Endothelial cell of umbilical vein (primary cell): ENCODE measurements at regions of chr6 and their contacts with region 1.

Region 1: DNA sequence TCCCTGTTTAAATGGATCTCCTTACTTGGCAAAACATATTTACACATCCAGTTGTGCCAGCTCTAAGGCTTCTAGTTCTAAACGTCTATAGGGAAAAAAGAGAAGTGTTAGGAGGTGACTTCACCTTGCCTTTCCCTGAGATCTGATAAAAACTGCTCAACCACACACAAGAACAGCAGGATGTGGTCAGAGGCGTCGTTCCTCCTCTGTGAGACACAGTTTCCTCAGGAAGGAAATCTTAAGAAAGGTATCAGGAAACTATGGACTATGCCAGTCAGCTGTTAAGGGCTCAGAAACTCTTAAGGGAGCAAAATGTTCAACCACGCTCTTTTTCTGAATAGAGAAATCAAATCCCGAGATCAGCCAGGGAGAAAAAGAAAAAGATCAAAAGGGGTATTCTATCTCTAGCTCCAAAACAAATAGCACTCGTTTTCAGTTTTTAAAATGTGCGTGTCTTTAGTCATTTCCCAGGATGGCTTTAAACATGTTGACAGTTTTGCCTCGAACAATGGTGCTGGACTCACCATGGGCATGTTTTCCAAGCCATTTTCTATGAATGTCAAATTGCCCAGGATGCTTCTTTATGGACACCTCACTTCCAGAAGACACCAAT is 154.5 kb downstream of the HACE1 start:
- DNase-seq: peak; percentile 88
- H3K4me3 ChIP-seq: peak overlapping the region in 1 of 3 experiments; percentile 45
- H3K27ac ChIP-seq: peak overlapping the region; percentile 99
- H3K4me1 ChIP-seq: peaks cover 48% of the 10 kb centered on the region
- H3K27me3 ChIP-seq: no peaks in the 10 kb centered on the region
- CTCF ChIP-seq: no peak
- POLR2A ChIP-seq: peak; percentile 51

Region 2: DNA sequence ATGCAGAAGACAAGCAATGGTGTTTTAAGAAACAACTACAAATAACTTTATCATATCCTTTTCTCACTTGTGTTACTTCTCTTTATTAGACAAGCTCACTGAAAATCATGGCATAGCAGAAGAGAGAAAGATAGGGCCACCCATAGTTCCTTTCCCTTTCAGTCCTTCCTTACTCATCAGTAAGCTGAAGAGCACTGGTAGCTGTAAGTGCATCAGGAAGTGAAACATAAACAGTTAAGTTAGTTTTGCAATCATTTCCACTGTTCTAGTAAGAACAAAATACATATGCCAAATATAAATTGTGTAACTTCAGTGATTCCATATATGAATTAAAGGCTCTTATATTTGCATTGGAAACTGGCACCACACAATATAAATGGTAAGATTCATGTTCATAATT is 65.5 kb before region 1 on chr6:
- CTCF ChIA-PET with region 1: interaction called, 4 read pairs
- POLR2A ChIA-PET with region 1: interaction called, 3 read pairs
- dilution Hi-C with region 1: no loop called
- intact Hi-C with region 1: loop called (anchors 1 kb)
- DNase-seq: peak; percentile 26
- H3K4me3 ChIP-seq: no peak overlapping the region
- H3K27ac ChIP-seq: peak overlapping the region; percentile 77
- H3K4me1 ChIP-seq: peaks cover 50% of the 10 kb centered on the region
- H3K27me3 ChIP-seq: no peaks in the 10 kb centered on the region
- CTCF ChIP-seq: no peak
- POLR2A ChIP-seq: no peak

Region 3: DNA sequence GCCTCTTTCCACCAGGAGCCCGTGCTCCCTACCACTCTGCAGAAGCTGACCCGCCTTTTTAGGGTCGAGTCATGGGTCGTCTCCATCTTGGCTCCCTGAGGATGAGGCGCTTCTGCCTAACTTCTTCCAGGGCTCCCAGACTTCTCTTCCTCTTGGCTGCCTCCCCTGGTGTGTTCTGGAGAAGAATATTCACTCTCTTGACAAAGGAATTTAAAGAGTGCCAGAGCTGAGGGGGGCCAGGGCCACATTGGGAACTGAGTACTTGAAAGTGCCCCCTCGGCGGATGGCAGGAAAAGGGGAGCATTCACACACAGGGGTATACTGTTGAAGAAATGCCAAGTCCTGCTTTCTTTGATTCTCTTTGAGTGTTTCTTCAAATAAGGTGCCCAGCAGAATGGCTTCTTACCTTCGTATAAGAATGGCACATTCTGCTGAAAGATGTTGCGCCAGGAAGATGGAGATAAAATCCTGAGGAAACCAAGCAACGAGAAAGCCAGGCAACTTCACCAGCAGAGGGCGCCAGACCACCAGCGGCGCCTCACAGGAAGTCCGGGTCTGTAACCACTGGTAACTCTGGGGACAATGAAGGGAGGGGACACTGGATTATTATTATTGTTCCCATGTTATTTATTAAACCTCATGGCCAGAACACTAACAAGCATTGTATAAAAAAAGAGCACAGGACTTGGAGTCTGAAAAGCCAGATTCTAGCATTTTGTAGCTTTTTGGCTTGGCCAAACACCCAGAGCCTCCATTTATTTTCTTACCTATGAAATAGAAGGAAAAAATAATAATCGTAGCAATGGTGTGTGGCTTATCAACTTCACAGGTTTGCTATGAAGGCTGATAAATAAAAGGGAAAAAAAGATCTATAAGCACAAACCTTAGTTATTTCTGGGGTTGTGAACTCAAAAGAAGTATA is 22.2 kb before region 1 on chr6:
- CTCF ChIA-PET with region 1: interaction called, 16 read pairs
- POLR2A ChIA-PET with region 1: no interaction called
- dilution Hi-C with region 1: no loop called
- intact Hi-C with region 1: loop called (anchors 1 kb)
- DNase-seq: peak; percentile 56
- H3K4me3 ChIP-seq: no peak overlapping the region
- H3K27ac ChIP-seq: peak overlapping the region; percentile 17
- H3K4me1 ChIP-seq: no peaks in the 10 kb centered on the region
- H3K27me3 ChIP-seq: no peaks in the 10 kb centered on the region
- CTCF ChIP-seq: peak; percentile 78 to 86
- POLR2A ChIP-seq: no peak

Region 4: DNA sequence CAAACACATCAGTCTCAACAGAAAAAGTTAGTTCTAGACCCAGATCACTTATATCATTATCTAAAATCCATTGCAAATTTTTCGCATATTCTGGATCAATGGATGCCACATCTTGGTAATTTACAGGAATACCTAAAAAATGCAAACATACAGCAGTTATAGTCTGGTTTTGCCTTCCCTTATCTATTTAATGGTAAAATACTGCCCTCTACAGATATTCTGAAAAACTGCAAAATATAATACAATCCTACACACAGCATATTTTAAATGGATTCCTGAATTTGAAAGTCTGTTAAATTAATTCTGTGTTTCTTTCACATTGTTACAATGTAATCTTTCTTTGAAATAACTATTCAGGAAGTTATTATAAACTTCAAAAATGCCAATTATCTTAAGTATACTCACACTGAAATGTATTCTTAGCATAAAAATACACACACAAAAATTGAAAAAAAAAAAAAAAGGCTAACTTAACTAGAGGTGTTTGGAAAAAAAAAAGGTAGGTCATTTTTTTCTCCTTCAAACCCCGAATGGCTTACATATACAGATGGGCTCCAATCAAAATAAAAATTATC is 66.1 kb after region 1 on chr6:
- CTCF ChIA-PET with region 1: interaction called, 3 read pairs
- POLR2A ChIA-PET with region 1: no interaction called
- dilution Hi-C with region 1: no loop called
- intact Hi-C with region 1: loop called (anchors 1 kb)
- DNase-seq: peak; percentile 51
- H3K4me3 ChIP-seq: no peak overlapping the region
- H3K27ac ChIP-seq: no peak overlapping the region
- H3K4me1 ChIP-seq: peaks cover 7% of the 10 kb centered on the region
- H3K27me3 ChIP-seq: no peaks in the 10 kb centered on the region
- CTCF ChIP-seq: peak; percentile 14 to 33
- POLR2A ChIP-seq: no peak

Region 5: GRCh38 chr6:104859225-104860146 is 154.3 kb after region 1 on chr6 and contains the start of gene HACE1:
- CTCF ChIA-PET with region 1: no interaction called
- POLR2A ChIA-PET with region 1: no interaction called
- dilution Hi-C with region 1: no loop called
- intact Hi-C with region 1: loop called (anchors 10 kb)
- DNase-seq: peak; percentile 93
- H3K4me3 ChIP-seq: peak within 1 kb of the TSS; percentile 57 to 87 (median 78)
- H3K27ac ChIP-seq: peak within 1 kb of the TSS; percentile 10
- H3K4me1 ChIP-seq: peaks cover 8% of the 10 kb centered on the region
- H3K27me3 ChIP-seq: no peaks in the 10 kb centered on the region
- CTCF ChIP-seq: peak; percentile 6 to 34
- POLR2A ChIP-seq: peak; percentile 49
- total RNA-seq, gene HACE1: 12.8 and 14.8 TPM in 2 replicates